ENCODE measurements at regions of chr11 and their contacts with region 1.

Region 1: GRCh38 chr11:88421530-88421929 is 84.0 kb upstream of the CTSC start:
- DNase-seq: peak; percentile 70
- H3K4me3 Mint-ChIP-seq: no peak overlapping the region
- H3K27ac Mint-ChIP-seq: peak overlapping the region; percentile 70
- H3K4me1 Mint-ChIP-seq: peaks cover 42% of the 10 kb centered on the region
- H3K27me3 Mint-ChIP-seq: no peaks in the 10 kb centered on the region

Region 2: DNA sequence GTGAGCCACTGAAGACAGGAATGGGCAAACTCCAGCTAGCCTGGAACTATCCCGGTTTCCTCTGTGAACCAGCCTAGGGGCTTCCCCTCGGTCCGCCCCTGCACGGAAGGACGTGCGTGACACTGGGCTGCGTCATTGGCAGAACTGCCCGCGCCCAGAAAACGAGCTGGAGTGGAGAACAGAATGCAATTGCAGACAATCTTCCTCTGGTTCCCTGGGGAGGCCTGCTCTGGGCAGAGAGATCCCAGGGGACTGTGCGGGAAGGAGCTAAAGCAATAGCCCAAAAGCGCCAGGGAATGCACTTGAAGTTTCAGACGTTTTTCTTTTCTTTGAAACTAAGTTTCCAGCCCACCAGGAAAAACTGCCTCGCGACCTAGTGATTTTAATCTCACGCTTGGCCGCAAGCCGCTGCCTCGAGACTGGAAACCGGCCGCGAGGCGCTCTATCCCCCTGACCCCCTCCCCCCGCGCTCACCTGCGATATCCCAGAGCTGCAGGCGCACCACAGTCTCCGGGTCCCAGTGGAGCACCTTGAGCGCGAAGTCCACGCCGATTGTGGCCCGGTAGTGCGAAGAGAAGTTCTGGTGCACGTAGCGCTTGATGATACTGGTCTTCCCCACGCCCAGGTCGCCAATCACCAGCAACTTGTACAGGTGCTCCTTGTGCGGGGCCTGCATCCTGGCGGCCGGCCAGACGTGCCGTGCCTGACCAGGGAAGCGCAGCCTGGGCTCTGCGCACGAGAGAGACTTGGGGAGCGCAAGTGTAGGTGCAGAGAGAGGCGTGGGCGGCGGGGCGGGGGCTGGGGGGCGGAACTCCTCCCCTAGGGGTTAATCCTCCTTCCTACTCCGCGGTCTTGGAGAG is 246.6 kb before region 1 on chr11 and contains the start of gene RAB38:
- CTCF ChIA-PET with region 1: no interaction called
- POLR2A ChIA-PET with region 1: no interaction called
- intact Hi-C with region 1: loop called (anchors 1 kb)
- DNase-seq: peak; percentile 74
- H3K4me3 Mint-ChIP-seq: peak within 1 kb of the TSS; percentile 70
- H3K27ac Mint-ChIP-seq: no peak within 1 kb of the TSS
- H3K4me1 Mint-ChIP-seq: peaks cover 37% of the 10 kb centered on the region
- H3K27me3 Mint-ChIP-seq: peaks cover 20% of the 10 kb centered on the region
- total RNA-seq, gene RAB38: 0.76 to 0.97 TPM

Region 3: GRCh38 chr11:88292171-88292843 is 129.2 kb before region 1 on chr11:
- CTCF ChIA-PET with region 1: no interaction called
- POLR2A ChIA-PET with region 1: no interaction called
- intact Hi-C with region 1: no loop called
- DNase-seq: no peak
- H3K4me3 Mint-ChIP-seq: no peak overlapping the region
- H3K27ac Mint-ChIP-seq: no peak overlapping the region
- H3K4me1 Mint-ChIP-seq: peaks cover 4% of the 10 kb centered on the region
- H3K27me3 Mint-ChIP-seq: no peaks in the 10 kb centered on the region

Region 4: DNA sequence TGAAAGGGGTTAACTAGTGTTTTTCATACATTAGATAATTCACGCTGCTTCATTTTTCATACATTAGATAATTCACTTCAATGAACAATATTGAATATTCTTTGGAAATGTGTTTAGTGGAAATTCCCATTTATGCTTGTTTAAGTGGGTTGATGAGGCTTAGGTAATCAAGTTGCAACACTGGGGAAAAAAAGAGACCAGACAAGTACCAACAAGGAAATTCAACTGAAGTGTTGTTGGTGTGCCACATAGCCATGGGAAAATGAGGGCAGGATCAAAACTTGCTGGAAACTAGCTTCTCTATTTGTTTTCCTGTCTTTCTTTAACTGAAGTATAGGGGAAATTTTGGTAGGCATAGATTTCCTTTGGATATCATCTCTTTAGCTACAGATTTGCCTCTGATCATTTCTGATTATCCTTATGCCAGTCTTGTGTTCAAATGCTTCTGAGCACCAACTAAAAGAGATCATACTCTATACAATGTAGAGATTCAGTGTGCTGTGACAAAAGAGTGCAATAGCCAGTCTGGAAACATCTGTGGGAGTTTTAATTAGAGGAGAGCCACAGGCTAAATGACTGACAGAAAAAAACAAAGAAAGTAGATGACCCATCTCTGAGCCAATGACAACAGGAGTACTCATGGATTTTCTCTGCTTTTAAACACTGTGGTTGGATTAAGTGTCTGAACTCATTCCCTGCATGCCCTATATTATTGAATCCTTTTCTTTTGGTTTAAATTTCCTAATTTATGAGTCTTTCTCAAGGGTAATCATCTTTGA is 16.4 kb before region 1 on chr11:
- CTCF ChIA-PET with region 1: no interaction called
- POLR2A ChIA-PET with region 1: no interaction called
- intact Hi-C with region 1: loop called (anchors 2 kb)
- DNase-seq: no peak
- H3K4me3 Mint-ChIP-seq: no peak overlapping the region
- H3K27ac Mint-ChIP-seq: no peak overlapping the region
- H3K4me1 Mint-ChIP-seq: peaks cover 11% of the 10 kb centered on the region
- H3K27me3 Mint-ChIP-seq: no peaks in the 10 kb centered on the region

Region 5: GRCh38 chr11:88435189-88435814 is 13.8 kb after region 1 on chr11:
- CTCF ChIA-PET with region 1: no interaction called
- POLR2A ChIA-PET with region 1: no interaction called
- intact Hi-C with region 1: loop called (anchors 2 kb)
- DNase-seq: no peak
- H3K4me3 Mint-ChIP-seq: no peak overlapping the region
- H3K27ac Mint-ChIP-seq: no peak overlapping the region
- H3K4me1 Mint-ChIP-seq: peaks cover 3% of the 10 kb centered on the region
- H3K27me3 Mint-ChIP-seq: no peaks in the 10 kb centered on the region

Region 6: DNA sequence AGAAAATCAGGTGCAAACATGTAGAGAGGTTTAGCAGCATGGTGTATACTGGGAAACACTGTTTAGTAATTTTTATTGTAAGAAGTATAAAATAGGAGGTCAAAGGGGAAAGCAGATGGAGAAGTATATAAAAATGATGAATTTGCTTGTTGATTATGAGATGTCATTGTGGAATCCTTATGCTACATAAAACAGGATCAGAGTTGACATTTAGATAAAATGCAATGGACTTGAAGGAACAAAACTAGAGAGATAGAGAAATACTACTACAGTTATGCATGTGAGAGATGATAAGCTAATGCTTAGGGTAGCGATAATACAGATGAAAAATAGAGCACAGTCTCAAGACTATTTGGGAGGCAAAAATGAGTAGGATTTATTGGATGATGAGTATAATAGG is 107.9 kb after region 1 on chr11:
- CTCF ChIA-PET with region 1: no interaction called
- POLR2A ChIA-PET with region 1: no interaction called
- intact Hi-C with region 1: no loop called
- DNase-seq: no peak
- H3K4me3 Mint-ChIP-seq: no peak overlapping the region
- H3K27ac Mint-ChIP-seq: no peak overlapping the region
- H3K4me1 Mint-ChIP-seq: peaks cover under 1% of the 10 kb centered on the region
- H3K27me3 Mint-ChIP-seq: peaks cover 4% of the 10 kb centered on the region